Left cardiac atrium (tissue), 4 donors: ENCODE measurements at regions of chr3 and their contacts with region 1.

Region 1: GRCh38 chr3:25594007-25594502 is 70.7 kb downstream of the TOP2B start:
- DNase-seq: peak; percentile 39
- ATAC-seq: peak; percentile 55 to 58

Region 2: DNA sequence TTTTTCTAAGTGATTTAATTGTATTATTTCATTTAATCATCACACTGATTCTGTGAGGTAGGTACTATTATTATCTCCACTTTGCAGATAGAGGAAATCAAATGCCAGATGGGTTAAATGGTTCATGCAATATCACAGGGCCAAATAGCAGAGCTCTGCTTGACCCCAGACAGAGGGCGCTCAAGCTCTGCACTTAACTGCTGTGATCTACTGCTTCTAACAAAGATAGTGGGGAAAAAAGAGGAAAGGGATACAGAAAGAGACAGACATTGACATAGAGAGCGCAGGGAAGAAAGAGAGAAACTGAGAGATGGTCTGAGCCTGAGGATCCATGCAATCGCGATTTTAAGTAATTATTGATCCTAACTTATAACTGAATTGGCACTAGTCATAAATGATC is 820.3 kb before region 1 on chr3:
- intact Hi-C with region 1: loop called in 1 of 2 experiments (anchors 5 kb)
- DNase-seq: peak; percentile 48
- ATAC-seq: peak; percentile 74 to 82

Region 3: DNA sequence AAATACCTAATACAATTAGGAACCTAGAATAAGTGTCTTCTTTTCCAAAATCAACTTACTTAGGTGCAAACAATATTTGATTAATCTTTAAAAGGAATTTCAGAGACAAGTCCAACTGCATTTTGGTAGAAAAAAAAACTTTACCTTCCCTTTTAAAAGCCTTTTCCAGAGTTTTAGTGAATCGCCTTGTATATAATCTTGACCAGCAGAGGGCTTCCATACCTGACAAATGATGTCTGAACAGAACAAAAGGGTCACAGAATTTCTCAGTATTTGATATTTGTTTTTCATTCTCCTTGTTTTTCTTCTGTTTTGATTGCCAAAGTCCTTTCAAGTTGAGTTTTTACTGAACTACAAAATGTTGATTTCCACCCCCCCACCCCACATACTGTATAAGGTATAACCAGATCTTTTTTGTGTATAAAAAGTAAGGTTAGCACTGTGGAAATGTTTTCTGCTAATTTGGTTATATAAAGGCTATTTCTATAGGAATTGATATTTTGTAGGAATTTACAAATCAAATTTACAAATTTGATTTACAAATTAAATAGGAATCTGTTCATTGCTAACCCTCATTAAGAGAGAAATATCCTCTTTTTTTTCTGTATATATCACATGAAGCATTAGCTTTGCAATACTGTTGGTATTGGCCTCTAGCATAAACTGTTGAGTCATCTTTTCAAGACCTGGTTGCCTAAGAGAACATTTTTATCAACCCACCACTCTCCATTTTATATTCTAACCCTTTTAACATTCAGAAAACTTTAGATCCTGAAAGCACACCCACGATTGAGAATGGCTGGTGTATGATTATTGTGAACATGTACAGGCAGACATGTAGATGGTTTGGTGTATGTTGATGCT is 630.1 kb before region 1 on chr3:
- intact Hi-C with region 1: loop called (anchors 5 to 10 kb)
- DNase-seq: no peak
- ATAC-seq: no peak

Region 4: GRCh38 chr3:25021816-25022215 is 572.2 kb before region 1 on chr3:
- intact Hi-C with region 1: loop called in 1 of 2 experiments (anchors 5 kb)
- DNase-seq: no peak
- ATAC-seq: peak; percentile 61 to 65

Region 5: GRCh38 chr3:25156626-25157025 is 437.4 kb before region 1 on chr3:
- intact Hi-C with region 1: loop called in 1 of 2 experiments (anchors 5 kb)
- DNase-seq: no peak
- ATAC-seq: peak; percentile 95 to 98

Region 6: GRCh38 chr3:25427942-25428788 is 165.9 kb before region 1 on chr3 and contains the start of gene RARB:
- intact Hi-C with region 1: loop called (anchors 2 to 5 kb)
- DNase-seq: peak; percentile 68
- ATAC-seq: peak; percentile 88 to 93
- total RNA-seq, gene RARB: 12.1 to 24.1 TPM

Region 7: GRCh38 chr3:25755257-25755656 is 161.2 kb after region 1 on chr3:
- intact Hi-C with region 1: no loop called
- DNase-seq: no peak
- ATAC-seq: no peak